ENCODE measurements at regions of chr4 and their contacts with region 1.

Region 1: DNA sequence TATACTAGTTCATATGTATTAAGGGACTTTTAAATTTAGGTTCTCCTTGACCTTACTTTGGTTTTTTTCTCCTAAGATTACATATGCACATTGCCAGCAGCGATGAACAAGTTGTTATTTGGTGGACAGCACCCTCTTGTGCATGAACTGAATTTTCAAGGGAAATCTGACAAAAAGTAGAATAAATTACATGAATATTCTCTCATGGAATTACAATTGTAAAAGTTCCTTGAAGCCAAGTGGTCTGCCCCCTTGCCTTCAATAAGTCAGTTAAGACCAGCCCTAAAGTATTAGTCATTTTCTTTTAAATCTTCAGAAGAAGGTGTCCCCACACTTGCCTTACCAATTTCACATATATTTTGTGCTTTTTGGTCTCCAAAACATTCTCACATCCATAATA is 30.7 kb upstream of the SMARCA5 start:
- DNase-seq: peak; percentile 57
- H3K4me3 Mint-ChIP-seq: no peak overlapping the region
- H3K27ac Mint-ChIP-seq: no peak overlapping the region
- H3K4me1 Mint-ChIP-seq: no peaks in the 10 kb centered on the region
- H3K27me3 Mint-ChIP-seq: no peaks in the 10 kb centered on the region
- CTCF ChIP-seq: peak; percentile 66

Region 2: GRCh38 chr4:142984871-142985585 is 497.8 kb before region 1 on chr4:
- CTCF ChIA-PET with region 1: no interaction called
- POLR2A ChIA-PET with region 1: no interaction called
- intact Hi-C with region 1: loop called (anchors 1 kb)
- DNase-seq: peak; percentile 55
- H3K4me3 Mint-ChIP-seq: no peak overlapping the region
- H3K27ac Mint-ChIP-seq: no peak overlapping the region
- H3K4me1 Mint-ChIP-seq: no peaks in the 10 kb centered on the region
- H3K27me3 Mint-ChIP-seq: peaks cover 92% of the 10 kb centered on the region
- CTCF ChIP-seq: peak; percentile 0

Region 3: GRCh38 chr4:143207557-143207956 is 275.3 kb before region 1 on chr4:
- CTCF ChIA-PET with region 1: interaction called, 14 read pairs
- POLR2A ChIA-PET with region 1: no interaction called
- intact Hi-C with region 1: loop called (anchors 1 kb)
- DNase-seq: peak; percentile 40
- H3K4me3 Mint-ChIP-seq: no peak overlapping the region
- H3K27ac Mint-ChIP-seq: no peak overlapping the region
- H3K4me1 Mint-ChIP-seq: no peaks in the 10 kb centered on the region
- H3K27me3 Mint-ChIP-seq: no peaks in the 10 kb centered on the region
- CTCF ChIP-seq: peak; percentile 23

Region 4: GRCh38 chr4:143375313-143376073 is 107.3 kb before region 1 on chr4:
- CTCF ChIA-PET with region 1: interaction called, 4 read pairs
- POLR2A ChIA-PET with region 1: no interaction called
- intact Hi-C with region 1: loop called (anchors 1 kb)
- DNase-seq: peak; percentile 34
- H3K4me3 Mint-ChIP-seq: no peak overlapping the region
- H3K27ac Mint-ChIP-seq: no peak overlapping the region
- H3K4me1 Mint-ChIP-seq: peaks cover 12% of the 10 kb centered on the region
- H3K27me3 Mint-ChIP-seq: no peaks in the 10 kb centered on the region
- CTCF ChIP-seq: peak; percentile 38

Region 5: GRCh38 chr4:143558823-143559756 is 76.2 kb after region 1 on chr4:
- CTCF ChIA-PET with region 1: no interaction called
- POLR2A ChIA-PET with region 1: no interaction called
- intact Hi-C with region 1: no loop called
- DNase-seq: peak; percentile 19
- H3K4me3 Mint-ChIP-seq: no peak overlapping the region
- H3K27ac Mint-ChIP-seq: no peak overlapping the region
- H3K4me1 Mint-ChIP-seq: no peaks in the 10 kb centered on the region
- H3K27me3 Mint-ChIP-seq: no peaks in the 10 kb centered on the region
- CTCF ChIP-seq: no peak

Measured in MCF 10A (cell line).